ENCODE measurements at regions of chr12 and their contacts with region 1.

Region 1: GRCh38 chr12:127677537-127678131 is 589.3 kb upstream of the TMEM132C start:
- DNase-seq: peak in 1 of 2 donors; percentile 84
- H3K4me3 ChIP-seq: no peak overlapping the region
- H3K27ac ChIP-seq: peak overlapping the region; percentile 13 to 32
- H3K4me1 ChIP-seq: peaks cover 0 to 9% of the 10 kb centered on the region in 2 donors
- H3K27me3 ChIP-seq: no peaks in the 10 kb centered on the region
- CTCF ChIP-seq: peak; percentile 59 to 80 (median 76)

Region 2: DNA sequence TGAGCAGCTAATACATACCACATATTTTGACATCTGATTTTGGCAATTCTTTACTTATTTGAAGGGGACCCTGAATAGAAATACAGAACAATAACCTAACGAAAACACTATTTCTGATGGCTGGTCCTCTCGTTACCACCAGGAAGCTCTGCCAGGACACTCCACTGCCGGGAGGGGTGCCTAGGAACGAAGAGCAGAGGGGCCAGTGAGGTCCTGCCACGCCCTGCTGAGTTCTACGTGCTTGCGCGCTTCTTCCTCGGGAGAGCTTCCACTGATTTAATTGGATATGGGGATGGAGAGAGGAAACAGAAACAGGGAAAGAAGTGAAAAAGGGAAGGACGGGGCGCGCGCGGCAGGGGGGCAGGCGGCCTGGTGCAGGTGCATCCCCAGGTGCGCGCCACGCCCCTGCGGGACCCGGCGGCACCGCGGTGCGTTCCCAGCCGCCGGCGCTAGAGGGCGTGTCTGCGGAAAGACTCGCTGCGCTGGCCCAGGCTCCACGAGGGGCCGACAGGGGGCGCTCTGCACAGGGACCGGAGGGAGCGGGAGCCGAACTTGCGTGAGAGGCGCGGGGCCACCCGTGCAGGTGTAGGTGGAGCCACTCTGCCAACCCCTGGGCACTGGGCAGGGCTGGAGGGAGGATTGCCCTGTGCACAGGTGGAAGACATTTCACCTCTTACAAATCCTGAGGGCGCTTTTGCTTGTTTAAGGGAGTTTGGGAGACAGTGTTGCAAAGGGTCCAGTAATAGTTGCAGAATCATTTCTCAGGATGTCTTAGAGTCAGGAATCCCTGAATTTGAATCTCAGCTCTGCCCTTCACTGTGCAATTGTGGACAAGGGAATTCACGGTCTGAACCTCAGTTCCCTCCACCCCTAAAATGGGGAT is 397.0 kb before region 1 on chr12:
- intact Hi-C with region 1: loop called (anchors 5 kb)
- DNase-seq: no peak
- H3K4me3 ChIP-seq: no peak overlapping the region
- H3K27ac ChIP-seq: no peak overlapping the region
- H3K4me1 ChIP-seq: peaks cover 4 to 6% of the 10 kb centered on the region in 2 donors
- H3K27me3 ChIP-seq: no peaks in the 10 kb centered on the region
- CTCF ChIP-seq: peak; percentile 71 to 84 (median 76)

Region 3: GRCh38 chr12:127455347-127456265 is 222.0 kb before region 1 on chr12:
- intact Hi-C with region 1: loop called (anchors 5 kb)
- DNase-seq: no peak
- H3K4me3 ChIP-seq: peak overlapping the region; percentile 52 to 65
- H3K27ac ChIP-seq: no peak overlapping the region
- H3K4me1 ChIP-seq: peaks cover 0 to 13% of the 10 kb centered on the region in 2 donors
- H3K27me3 ChIP-seq: no peaks in the 10 kb centered on the region
- CTCF ChIP-seq: peak in 2 of 3 experiments; percentile 17 to 24

Region 4: GRCh38 chr12:127640181-127640886 is 37.3 kb before region 1 on chr12:
- intact Hi-C with region 1: loop called (anchors 5 kb)
- DNase-seq: peak; percentile 14 to 86
- H3K4me3 ChIP-seq: peak overlapping the region in 1 of 2 donors; percentile 6
- H3K27ac ChIP-seq: peak overlapping the region; percentile 72 to 81
- H3K4me1 ChIP-seq: peaks cover 0 to 16% of the 10 kb centered on the region in 2 donors
- H3K27me3 ChIP-seq: no peaks in the 10 kb centered on the region
- CTCF ChIP-seq: no peak

Region 5: GRCh38 chr12:127731619-127732018 is 54.0 kb after region 1 on chr12:
- intact Hi-C with region 1: no loop called
- DNase-seq: no peak
- H3K4me3 ChIP-seq: no peak overlapping the region
- H3K27ac ChIP-seq: no peak overlapping the region
- H3K4me1 ChIP-seq: no peaks in the 10 kb centered on the region
- H3K27me3 ChIP-seq: no peaks in the 10 kb centered on the region
- CTCF ChIP-seq: no peak

Region 6: GRCh38 chr12:127745469-127746212 is 68.0 kb after region 1 on chr12:
- intact Hi-C with region 1: no loop called
- DNase-seq: no peak
- H3K4me3 ChIP-seq: no peak overlapping the region
- H3K27ac ChIP-seq: no peak overlapping the region
- H3K4me1 ChIP-seq: no peaks in the 10 kb centered on the region
- H3K27me3 ChIP-seq: no peaks in the 10 kb centered on the region
- CTCF ChIP-seq: no peak

Region 7: DNA sequence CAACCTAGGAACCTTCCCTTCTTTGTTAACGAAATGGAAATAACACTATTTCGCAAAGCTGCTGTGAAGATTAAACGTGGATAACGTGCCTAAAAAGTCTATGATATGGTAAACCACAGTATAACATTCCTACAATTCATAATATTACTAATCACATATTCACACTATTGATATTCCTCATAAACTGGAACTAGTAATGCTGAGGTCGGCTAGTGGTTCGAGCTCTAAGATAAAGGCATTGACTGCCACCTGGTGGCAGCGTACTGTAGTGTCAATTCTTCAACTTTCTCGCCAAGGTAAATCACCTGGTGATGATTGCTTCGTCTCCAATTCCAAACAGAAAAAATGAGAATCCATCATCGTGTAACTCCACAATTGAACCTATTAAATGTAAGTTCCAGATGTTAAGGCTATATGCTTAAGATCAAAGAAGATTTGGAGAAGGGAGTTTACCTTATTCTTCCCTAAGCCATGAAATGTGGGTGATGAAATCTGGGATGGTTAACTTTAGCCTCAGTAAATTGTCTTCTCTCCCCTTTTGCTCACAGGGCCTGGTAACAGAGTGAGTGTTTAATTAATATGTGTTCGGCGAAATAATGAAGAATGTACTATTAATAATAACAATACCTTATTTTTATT is 391.8 kb after region 1 on chr12:
- intact Hi-C with region 1: loop called (anchors 5 kb)
- DNase-seq: no peak
- H3K4me3 ChIP-seq: no peak overlapping the region
- H3K27ac ChIP-seq: no peak overlapping the region
- H3K4me1 ChIP-seq: no peaks in the 10 kb centered on the region
- H3K27me3 ChIP-seq: no peaks in the 10 kb centered on the region
- CTCF ChIP-seq: peak in 2 of 3 experiments; percentile 65 to 66